Psoas muscle (tissue), 8 donors: ENCODE measurements at regions of chr21 and their contacts with region 1.

Region 1: GRCh38 chr21:37267269-37268184 is at the start of gene VPS26C:
- DNase-seq: peak; percentile 98 to 99
- ATAC-seq: peak; percentile 91 to 94 (median 93)
- H3K4me3 ChIP-seq: peak within 1 kb of the TSS; percentile 96
- H3K27ac ChIP-seq: peak within 1 kb of the TSS; percentile 95
- H3K4me1 ChIP-seq: peaks cover 40% of the 10 kb centered on the region
- H3K27me3 ChIP-seq: no peaks in the 10 kb centered on the region
- CTCF ChIP-seq: no peak
- total RNA-seq, gene VPS26C: 32.7 to 58.4 (median 46.8) TPM

Region 2: GRCh38 chr21:37220981-37221664 is 46.4 kb before region 1 on chr21:
- intact Hi-C with region 1: loop called in 1 of 2 experiments (anchors 5 kb)
- DNase-seq: peak; percentile 95 to 97
- ATAC-seq: peak; percentile 93 to 97 (median 94)
- H3K4me3 ChIP-seq: peak overlapping the region; percentile 78
- H3K27ac ChIP-seq: peak overlapping the region; percentile 83
- H3K4me1 ChIP-seq: peaks cover 8% of the 10 kb centered on the region
- H3K27me3 ChIP-seq: no peaks in the 10 kb centered on the region
- CTCF ChIP-seq: no peak

Region 3: DNA sequence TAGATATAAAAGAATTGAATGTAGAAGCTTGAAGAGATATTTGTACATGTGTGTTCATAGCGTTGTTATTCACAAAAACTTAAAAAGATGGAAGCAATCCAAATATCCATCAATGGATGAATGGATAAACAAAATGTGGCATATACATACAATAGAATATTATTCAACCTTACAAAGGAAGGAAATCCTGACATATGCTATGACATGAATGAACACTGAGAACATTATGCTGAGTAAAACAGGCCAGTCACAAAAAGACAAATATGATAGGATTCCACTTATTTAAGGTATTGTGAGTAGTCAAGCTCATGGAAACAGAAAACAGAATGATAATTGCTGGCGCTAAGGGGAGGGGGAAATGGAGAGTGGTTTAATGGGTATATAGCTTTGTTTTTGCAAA is 52.0 kb after region 1 on chr21:
- intact Hi-C with region 1: no loop called
- DNase-seq: no peak
- ATAC-seq: no peak
- H3K4me3 ChIP-seq: no peak overlapping the region
- H3K27ac ChIP-seq: no peak overlapping the region
- H3K4me1 ChIP-seq: no peaks in the 10 kb centered on the region
- H3K27me3 ChIP-seq: no peaks in the 10 kb centered on the region
- CTCF ChIP-seq: no peak

Region 4: DNA sequence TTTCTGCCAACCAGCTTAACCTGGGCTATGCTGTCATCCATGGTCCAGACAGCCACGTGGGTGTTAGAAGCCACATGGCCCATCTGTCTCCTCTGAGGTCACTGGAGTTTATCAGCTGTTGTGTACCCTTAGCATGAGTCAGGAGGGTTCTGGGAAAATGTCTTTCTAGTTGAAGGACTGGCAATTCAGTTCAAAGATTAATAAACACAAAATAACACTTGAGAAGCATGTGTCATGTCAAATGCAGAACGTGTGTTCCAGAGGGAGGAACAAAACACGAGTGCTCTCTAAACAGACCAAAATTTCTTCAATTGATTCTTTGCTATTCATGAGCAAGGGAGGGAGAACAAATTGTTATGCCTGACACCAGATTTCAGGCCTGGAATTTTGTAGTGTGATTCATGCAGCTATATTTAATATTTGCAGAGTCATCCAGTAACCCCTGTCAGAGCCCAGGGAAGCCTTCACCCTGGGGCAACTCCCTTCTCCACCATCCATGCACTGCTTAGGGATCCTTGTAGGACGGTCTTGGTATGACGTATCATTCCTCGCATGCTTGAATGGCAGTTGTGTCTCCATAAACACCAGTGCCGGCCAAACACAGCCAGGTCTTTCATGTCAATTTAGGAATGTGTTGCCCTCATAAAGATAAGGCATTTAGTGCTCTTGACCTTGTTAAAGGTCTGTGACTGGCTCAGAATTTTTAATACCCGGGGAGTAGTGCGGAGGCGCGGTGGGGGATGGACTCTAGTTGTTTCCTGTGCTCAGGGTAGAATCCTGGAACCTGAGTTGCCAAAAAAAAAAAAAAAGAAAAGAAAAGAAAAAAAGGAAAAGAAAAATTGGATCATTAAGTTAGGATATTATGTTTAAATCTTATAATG is 71.4 kb after region 1 on chr21:
- intact Hi-C with region 1: loop called (anchors 1 to 10 kb)
- DNase-seq: peak; percentile 49 to 78
- ATAC-seq: peak; percentile 97 to 99 (median 98)
- H3K4me3 ChIP-seq: peak overlapping the region; percentile 37
- H3K27ac ChIP-seq: peak overlapping the region; percentile 90
- H3K4me1 ChIP-seq: peaks cover 4% of the 10 kb centered on the region
- H3K27me3 ChIP-seq: no peaks in the 10 kb centered on the region
- CTCF ChIP-seq: no peak

Region 5: DNA sequence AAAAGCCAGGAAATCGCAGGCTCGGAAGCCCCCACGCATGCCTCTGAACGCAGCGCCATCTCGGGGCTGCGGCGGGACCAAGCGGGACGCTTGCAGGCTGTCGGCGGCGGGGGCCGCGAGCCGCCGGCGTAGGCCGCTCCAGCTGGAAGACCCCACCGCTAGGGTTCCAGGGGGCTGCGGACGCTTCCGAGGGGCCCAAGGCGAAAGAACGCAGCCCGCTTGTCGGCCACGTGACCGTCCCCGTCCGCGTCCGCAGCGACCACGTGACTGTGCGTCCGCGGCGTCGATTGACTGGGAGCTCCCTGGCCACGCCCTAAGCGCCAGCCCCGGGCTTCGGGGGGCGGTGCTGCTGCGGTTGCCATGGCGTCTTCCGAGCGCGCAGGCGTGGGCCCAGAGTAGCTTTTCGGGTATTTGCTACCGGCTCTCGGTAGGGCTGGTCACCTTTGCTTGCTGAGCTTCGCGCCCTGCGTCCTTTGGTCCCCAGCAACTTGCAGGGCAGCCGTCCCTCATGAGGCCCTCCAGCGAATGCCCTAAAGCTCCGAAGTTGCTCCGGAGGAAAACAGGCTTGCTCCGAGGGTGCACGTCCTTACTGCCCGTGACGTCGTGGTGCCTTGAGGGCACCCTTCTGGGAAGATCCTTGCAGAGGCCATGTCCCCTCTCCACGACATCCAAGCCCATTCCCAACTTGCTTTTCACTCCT is 296.3 kb after region 1 on chr21:
- intact Hi-C with region 1: loop called in 1 of 2 experiments (anchors 5 kb)
- DNase-seq: peak; percentile 94 to 97
- ATAC-seq: peak; percentile 82 to 90 (median 88)
- H3K4me3 ChIP-seq: peak overlapping the region; percentile 87
- H3K27ac ChIP-seq: peak overlapping the region; percentile 97
- H3K4me1 ChIP-seq: peaks cover 30% of the 10 kb centered on the region
- H3K27me3 ChIP-seq: no peaks in the 10 kb centered on the region
- CTCF ChIP-seq: peak; percentile 52